ENCODE measurements at regions of chr12 and their contacts with region 1.

Region 1: GRCh38 chr12:50504798-50505385 is at the start of gene DIP2B:
- DNase-seq: peak; percentile 96 to 97 (median 96)
- ATAC-seq: peak; percentile 87 to 96 (median 94)
- H3K4me3 ChIP-seq: peak within 1 kb of the TSS; percentile 73 to 85 (median 79)
- H3K27ac ChIP-seq: peak within 1 kb of the TSS; percentile 91 to 95 (median 95)
- H3K4me1 ChIP-seq: peaks cover 0 to 41% (median 15%) of the 10 kb centered on the region in 4 donors
- H3K27me3 ChIP-seq: no peaks in the 10 kb centered on the region
- CTCF ChIP-seq: peak; percentile 88 to 97 (median 92)
- POLR2A ChIP-seq: peak; percentile 81
- total RNA-seq, gene DIP2B: 11.1 to 24.0 (median 14.8) TPM

Region 2: GRCh38 chr12:50637870-50638481 is 133.1 kb after region 1 on chr12:
- intact Hi-C with region 1: loop called in 1 of 2 experiments (anchors 10 kb)
- DNase-seq: no peak
- ATAC-seq: peak; percentile 65 to 74 (median 70)
- H3K4me3 ChIP-seq: no peak overlapping the region
- H3K27ac ChIP-seq: no peak overlapping the region
- H3K4me1 ChIP-seq: peaks cover 0 to 30% (median 8%) of the 10 kb centered on the region in 4 donors
- H3K27me3 ChIP-seq: no peaks in the 10 kb centered on the region
- CTCF ChIP-seq: peak; percentile 56 to 75 (median 74)
- POLR2A ChIP-seq: no peak

Region 3: GRCh38 chr12:50689437-50689836 is 184.5 kb after region 1 on chr12:
- intact Hi-C with region 1: no loop called
- DNase-seq: no peak
- ATAC-seq: no peak
- H3K4me3 ChIP-seq: no peak overlapping the region
- H3K27ac ChIP-seq: no peak overlapping the region
- H3K4me1 ChIP-seq: no peaks in the 10 kb centered on the region
- H3K27me3 ChIP-seq: no peaks in the 10 kb centered on the region
- CTCF ChIP-seq: no peak
- POLR2A ChIP-seq: no peak

Region 4: DNA sequence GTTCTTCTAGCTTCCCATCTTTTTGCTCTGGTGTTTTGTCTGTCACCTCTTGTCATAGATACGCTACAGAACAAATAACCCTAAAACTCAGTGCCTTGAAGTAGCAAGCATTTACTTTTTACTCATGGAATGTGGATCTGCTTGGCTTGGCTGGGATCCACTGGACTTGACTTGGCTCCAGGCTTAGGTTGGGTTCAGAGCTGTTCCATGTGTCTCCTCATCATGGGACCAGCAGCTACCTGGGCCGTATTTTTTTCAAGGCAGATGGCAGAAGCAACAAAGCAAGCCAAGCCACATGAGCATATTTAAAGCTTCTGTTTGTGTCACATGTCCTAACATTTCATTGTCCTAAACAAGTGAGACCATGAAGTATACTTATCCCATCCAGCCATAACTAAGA is 210.3 kb after region 1 on chr12:
- intact Hi-C with region 1: loop called in 1 of 2 experiments (anchors 10 kb)
- DNase-seq: peak in 2 of 3 donors; percentile 28 to 65
- ATAC-seq: peak; percentile 69 to 84 (median 74)
- H3K4me3 ChIP-seq: no peak overlapping the region
- H3K27ac ChIP-seq: no peak overlapping the region
- H3K4me1 ChIP-seq: peaks cover 0 to 16% (median 6%) of the 10 kb centered on the region in 4 donors
- H3K27me3 ChIP-seq: no peaks in the 10 kb centered on the region
- CTCF ChIP-seq: no peak
- POLR2A ChIP-seq: no peak

Region 5: DNA sequence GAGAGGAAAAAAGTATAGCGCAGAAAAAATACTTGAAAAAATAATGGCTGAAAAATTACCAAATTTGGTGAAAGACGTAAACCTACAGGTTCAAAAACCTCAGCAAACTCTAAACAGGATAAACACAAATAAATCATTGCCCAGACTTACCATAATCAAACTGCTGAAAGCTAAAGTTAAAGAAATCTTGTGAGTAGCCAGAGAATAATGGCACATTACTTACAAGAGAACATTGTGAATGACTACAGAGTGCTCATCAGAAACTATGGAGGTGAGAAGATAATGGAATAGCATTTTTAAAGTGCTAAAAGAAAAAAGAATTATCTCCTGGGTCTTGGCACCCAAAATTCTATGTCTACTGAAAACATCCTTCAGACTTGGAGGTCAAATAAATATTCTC is 295.0 kb after region 1 on chr12:
- intact Hi-C with region 1: no loop called
- DNase-seq: no peak
- ATAC-seq: no peak
- H3K4me3 ChIP-seq: no peak overlapping the region
- H3K27ac ChIP-seq: no peak overlapping the region
- H3K4me1 ChIP-seq: no peaks in the 10 kb centered on the region
- H3K27me3 ChIP-seq: no peaks in the 10 kb centered on the region
- CTCF ChIP-seq: no peak
- POLR2A ChIP-seq: no peak